ENCODE measurements at regions of chr12 and their contacts with region 1.

Region 1: DNA sequence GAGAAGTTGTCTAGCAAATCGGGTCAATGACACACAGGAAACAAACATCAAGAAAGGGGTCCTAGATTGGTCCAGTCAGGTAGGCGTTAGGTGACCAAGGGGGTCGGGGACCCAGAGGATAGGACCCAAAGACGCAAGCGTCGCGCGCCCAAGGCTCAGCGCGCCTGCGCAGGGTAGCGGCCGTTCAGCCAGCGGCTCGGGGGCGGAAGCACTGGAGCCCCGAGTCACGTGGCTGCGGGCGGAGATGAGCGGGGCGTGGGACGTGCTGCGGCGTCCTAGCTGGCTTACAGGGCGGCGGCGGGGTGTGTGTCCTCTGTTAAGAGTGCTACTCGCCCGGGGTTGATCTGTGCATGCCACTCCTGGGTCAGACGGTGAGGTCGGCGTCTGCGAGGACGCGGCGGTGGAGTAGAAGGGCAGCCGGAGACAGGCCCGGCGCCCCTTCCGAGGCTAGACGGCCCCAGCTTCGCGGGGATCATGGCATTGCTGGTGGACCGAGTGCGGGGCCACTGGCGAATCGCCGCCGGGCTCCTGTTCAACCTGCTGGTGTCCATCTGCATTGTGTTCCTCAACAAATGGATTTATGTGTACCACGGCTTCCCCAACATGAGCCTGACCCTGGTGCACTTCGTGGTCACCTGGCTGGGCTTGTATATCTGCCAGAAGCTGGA is at the start of gene SLC35E3:
- DNase-seq: peak; percentile 97
- ATAC-seq: peak; percentile 100
- total RNA-seq, gene SLC35E3: 2.6 TPM

Region 2: GRCh38 chr12:68565375-68565903 is 180.6 kb before region 1 on chr12:
- intact Hi-C with region 1: no loop called
- DNase-seq: no peak
- ATAC-seq: no peak

Region 3: GRCh38 chr12:68809190-68810026 is 63.4 kb after region 1 on chr12:
- intact Hi-C with region 1: loop called (anchors 10 kb)
- DNase-seq: no peak
- ATAC-seq: no peak

Region 4: GRCh38 chr12:68831272-68831671 is 85.2 kb after region 1 on chr12:
- intact Hi-C with region 1: no loop called
- DNase-seq: no peak
- ATAC-seq: no peak

Region 5: DNA sequence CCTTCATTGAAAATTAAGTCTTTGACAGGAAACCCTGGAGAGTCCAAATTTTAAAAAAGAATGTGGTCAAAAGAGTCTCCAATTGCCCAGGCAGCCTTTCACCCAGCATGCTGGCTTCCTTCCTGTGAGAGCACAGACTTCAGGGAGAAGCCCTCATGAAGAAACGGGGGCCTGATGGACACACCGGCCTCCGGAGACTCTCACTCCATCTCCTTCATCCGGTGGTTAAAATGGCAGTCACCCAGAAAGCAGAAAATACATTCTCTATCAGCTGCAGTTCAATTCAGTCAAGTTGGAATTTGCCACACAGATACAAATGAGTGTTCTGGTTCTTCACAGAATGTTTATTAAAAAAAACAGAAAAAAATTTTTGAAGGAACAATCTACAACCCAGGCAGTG is 130.4 kb after region 1 on chr12:
- intact Hi-C with region 1: no loop called
- DNase-seq: no peak
- ATAC-seq: no peak